Caco-2 (cell line): ENCODE measurements at regions of chr17 and their contacts with region 1.

Region 1: GRCh38 chr17:74457146-74457819 is 9.2 kb upstream of the CD300A start:
- DNase-seq: peak; percentile 69 to 83
- H3K4me3 ChIP-seq: no peak overlapping the region
- H3K4me3 Mint-ChIP-seq: no peak overlapping the region
- H3K27ac Mint-ChIP-seq: no peak overlapping the region
- H3K4me1 ChIP-seq: peaks cover 16% of the 10 kb centered on the region
- H3K4me1 Mint-ChIP-seq: peaks cover 8% of the 10 kb centered on the region
- H3K27me3 ChIP-seq: no peaks in the 10 kb centered on the region
- H3K27me3 Mint-ChIP-seq: no peaks in the 10 kb centered on the region
- CTCF ChIP-seq: peak; percentile 93 to 95

Region 2: GRCh38 chr17:74296548-74296936 is 160.7 kb before region 1 on chr17:
- CTCF ChIA-PET with region 1: interaction called, 9 read pairs
- POLR2A ChIA-PET with region 1: no interaction called
- intact Hi-C with region 1: loop called (anchors 2 kb)
- DNase-seq: peak; percentile 81
- H3K4me3 ChIP-seq: no peak overlapping the region
- H3K4me3 Mint-ChIP-seq: no peak overlapping the region
- H3K27ac Mint-ChIP-seq: no peak overlapping the region
- H3K4me1 ChIP-seq: 0 out of 2 replicates have a peak, but pooled peaks cover 5% of the 10 kb centered on the region
- H3K4me1 Mint-ChIP-seq: peaks cover 8% of the 10 kb centered on the region
- H3K27me3 ChIP-seq: no peaks in the 10 kb centered on the region
- H3K27me3 Mint-ChIP-seq: peaks cover 3% of the 10 kb centered on the region
- CTCF ChIP-seq: peak; percentile 63 to 82

Region 3: DNA sequence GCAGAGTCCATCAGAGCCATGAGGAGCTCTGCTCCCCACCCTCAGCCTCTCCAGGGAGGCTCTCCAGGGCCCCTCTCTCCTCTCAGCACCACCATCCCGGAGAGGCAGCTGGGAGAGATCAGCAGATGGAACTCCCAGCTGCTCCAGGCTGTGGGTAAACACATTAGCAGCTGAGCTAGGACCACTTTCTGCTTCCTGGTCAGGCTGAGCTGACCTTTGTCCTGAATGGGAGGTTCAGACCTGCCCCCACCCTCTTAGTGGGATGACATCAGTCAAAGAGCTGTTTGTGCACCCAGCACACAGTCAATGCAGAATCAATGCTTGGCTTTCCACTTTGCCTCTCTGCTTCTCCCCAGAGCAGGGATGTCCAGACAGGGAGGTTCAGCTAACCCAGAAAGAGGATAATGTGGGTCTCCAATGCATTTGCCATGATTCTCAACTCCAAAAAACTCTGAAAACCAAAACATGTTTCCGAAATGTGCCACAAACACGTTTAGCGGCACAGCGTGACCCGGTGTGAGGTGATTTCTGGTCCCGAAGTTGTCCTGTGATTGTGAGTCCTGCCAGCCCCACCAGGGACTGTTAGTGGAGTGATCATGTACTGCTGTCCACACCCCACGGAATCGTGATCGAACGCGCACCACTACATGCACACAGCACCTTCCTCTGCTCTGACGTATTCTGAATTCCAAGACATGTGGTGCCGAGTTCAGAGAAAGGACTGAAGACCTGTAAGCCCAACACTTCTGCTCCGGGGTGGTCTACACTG is 83.3 kb before region 1 on chr17:
- CTCF ChIA-PET with region 1: interaction called, 110 read pairs
- POLR2A ChIA-PET with region 1: interaction called, 5 read pairs
- intact Hi-C with region 1: loop called (anchors 1 kb)
- DNase-seq: peak; percentile 86 to 89
- H3K4me3 ChIP-seq: no peak overlapping the region
- H3K4me3 Mint-ChIP-seq: no peak overlapping the region
- H3K27ac Mint-ChIP-seq: peak overlapping the region; percentile 67
- H3K4me1 ChIP-seq: peaks cover 14% of the 10 kb centered on the region
- H3K4me1 Mint-ChIP-seq: peaks cover 3% of the 10 kb centered on the region
- H3K27me3 ChIP-seq: no peaks in the 10 kb centered on the region
- H3K27me3 Mint-ChIP-seq: no peaks in the 10 kb centered on the region
- CTCF ChIP-seq: no peak

Region 4: DNA sequence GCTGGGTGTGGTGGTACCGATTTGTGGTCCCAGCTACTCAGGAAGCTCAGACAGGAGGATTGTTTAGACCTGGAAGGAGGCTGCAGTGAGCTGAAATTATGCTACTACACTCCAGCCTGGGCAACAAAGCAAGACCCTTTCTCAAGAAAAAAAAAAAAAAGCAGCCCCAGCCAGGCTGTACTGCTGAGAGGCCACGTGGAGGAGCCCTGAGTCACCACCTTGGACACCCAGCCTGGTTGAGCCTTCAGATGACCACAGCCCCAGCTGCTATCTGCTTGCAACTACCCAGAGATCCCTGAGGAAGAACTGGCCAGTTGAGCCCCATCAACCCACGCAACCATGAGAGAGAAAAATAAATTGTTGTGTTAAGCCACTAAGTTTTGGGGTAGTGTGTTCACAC is 49.0 kb before region 1 on chr17:
- CTCF ChIA-PET with region 1: interaction called, 26 read pairs
- POLR2A ChIA-PET with region 1: no interaction called
- intact Hi-C with region 1: loop called (anchors 1 kb)
- DNase-seq: peak; percentile 73 to 80
- H3K4me3 ChIP-seq: no peak overlapping the region
- H3K4me3 Mint-ChIP-seq: no peak overlapping the region
- H3K27ac Mint-ChIP-seq: no peak overlapping the region
- H3K4me1 ChIP-seq: peaks cover 5% of the 10 kb centered on the region; the same call in 1 of the 2 replicates
- H3K4me1 Mint-ChIP-seq: peaks cover 6% of the 10 kb centered on the region
- H3K27me3 ChIP-seq: no peaks in the 10 kb centered on the region
- H3K27me3 Mint-ChIP-seq: no peaks in the 10 kb centered on the region
- CTCF ChIP-seq: peak in 1 of 2 experiments; percentile 64

Region 5: DNA sequence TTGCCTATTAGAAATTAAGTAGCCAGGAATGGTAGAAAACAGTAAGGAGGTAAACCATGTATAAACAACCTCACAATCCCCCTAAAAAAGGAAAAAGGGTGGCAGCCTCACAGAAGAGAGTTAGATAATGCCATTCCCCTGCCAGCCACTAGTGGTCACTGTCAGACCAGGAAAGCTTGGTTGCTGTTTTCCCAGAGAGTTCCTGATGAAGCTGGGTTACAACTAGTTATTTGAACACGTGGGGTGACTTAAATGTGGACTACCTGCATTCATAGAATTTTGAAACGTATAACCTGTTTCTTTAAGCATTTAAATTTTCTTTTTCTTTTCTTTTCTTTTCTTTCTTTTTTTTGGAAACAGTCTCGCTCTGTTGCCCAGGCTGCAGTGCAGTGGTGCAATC is 19.6 kb before region 1 on chr17:
- CTCF ChIA-PET with region 1: interaction called, 20 read pairs
- POLR2A ChIA-PET with region 1: interaction called, 3 read pairs
- intact Hi-C with region 1: loop called (anchors 2 kb)
- DNase-seq: peak in 1 of 2 experiments; percentile 32
- H3K4me3 ChIP-seq: no peak overlapping the region
- H3K4me3 Mint-ChIP-seq: no peak overlapping the region
- H3K27ac Mint-ChIP-seq: no peak overlapping the region
- H3K4me1 ChIP-seq: peaks cover 32% of the 10 kb centered on the region
- H3K4me1 Mint-ChIP-seq: peaks cover 22% of the 10 kb centered on the region
- H3K27me3 ChIP-seq: no peaks in the 10 kb centered on the region
- H3K27me3 Mint-ChIP-seq: no peaks in the 10 kb centered on the region
- CTCF ChIP-seq: peak; percentile 67 to 79

Region 6: GRCh38 chr17:74873038-74873873 is 416.0 kb after region 1 on chr17:
- CTCF ChIA-PET with region 1: interaction called, 12 read pairs
- POLR2A ChIA-PET with region 1: no interaction called
- intact Hi-C with region 1: no loop called
- DNase-seq: peak; percentile 99 to 100
- H3K4me3 ChIP-seq: peak overlapping the region; percentile 83
- H3K4me3 Mint-ChIP-seq: peak overlapping the region; percentile 84
- H3K27ac Mint-ChIP-seq: peak overlapping the region; percentile 55
- H3K4me1 ChIP-seq: peaks cover 12% of the 10 kb centered on the region
- H3K4me1 Mint-ChIP-seq: peaks cover 21% of the 10 kb centered on the region
- H3K27me3 ChIP-seq: no peaks in the 10 kb centered on the region
- H3K27me3 Mint-ChIP-seq: no peaks in the 10 kb centered on the region
- CTCF ChIP-seq: no peak